Activated CD4-positive, alpha-beta T cell treated with anti-CD3 and anti-CD28 coated beads for 36 hours (primary cell): ENCODE measurements at regions of chr11 and their contacts with region 1.

Region 1: DNA sequence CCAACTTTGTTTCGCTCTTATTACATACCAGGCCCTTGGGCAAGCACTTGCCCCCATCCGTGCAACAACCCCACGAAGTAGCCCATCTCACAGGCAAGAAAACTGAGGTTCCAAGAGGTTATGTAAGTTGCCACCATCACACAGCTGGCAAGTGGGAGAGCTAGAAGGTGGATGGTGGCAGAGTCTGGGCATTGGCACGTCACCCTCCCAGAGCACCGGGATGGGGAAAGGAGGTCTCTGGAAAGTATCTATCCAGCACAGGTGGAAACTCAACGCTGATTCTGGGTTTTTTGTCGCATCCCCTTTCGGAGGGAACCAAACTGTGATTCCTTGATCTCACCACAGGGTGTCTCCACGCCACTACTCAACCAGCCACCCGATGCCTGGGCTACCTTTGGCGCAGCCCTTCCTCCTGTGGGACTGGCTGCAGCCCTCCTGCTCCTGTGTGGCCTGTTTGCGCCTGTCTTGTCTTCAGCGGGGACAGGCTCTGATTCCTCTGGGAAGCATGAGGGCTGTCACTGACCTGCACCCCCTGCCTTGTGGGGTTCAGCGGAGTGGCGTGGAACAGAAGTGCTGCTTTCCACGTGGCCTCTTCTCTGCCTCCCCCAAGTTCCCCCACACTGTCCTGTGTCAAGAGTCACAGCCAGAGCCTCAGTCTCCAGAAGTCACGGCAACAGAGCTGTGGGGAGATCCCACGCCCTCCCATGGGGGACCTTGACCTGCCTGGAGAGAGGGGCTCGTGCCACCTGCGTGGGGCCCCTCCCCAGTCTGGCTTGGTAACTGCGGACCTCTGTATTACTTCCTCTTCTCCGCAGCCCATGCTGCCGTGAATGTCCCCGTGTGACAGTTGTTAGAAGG is 34.4 kb upstream of the TRIM29 start:
- DNase-seq: peak; percentile 76
- ATAC-seq: peak; percentile 60
- H3K4me3 Mint-ChIP-seq: no peak overlapping the region
- H3K27ac Mint-ChIP-seq: no peak overlapping the region
- H3K4me1 Mint-ChIP-seq: peaks cover 4% of the 10 kb centered on the region
- H3K27me3 Mint-ChIP-seq: peaks cover 61% of the 10 kb centered on the region

Region 2: DNA sequence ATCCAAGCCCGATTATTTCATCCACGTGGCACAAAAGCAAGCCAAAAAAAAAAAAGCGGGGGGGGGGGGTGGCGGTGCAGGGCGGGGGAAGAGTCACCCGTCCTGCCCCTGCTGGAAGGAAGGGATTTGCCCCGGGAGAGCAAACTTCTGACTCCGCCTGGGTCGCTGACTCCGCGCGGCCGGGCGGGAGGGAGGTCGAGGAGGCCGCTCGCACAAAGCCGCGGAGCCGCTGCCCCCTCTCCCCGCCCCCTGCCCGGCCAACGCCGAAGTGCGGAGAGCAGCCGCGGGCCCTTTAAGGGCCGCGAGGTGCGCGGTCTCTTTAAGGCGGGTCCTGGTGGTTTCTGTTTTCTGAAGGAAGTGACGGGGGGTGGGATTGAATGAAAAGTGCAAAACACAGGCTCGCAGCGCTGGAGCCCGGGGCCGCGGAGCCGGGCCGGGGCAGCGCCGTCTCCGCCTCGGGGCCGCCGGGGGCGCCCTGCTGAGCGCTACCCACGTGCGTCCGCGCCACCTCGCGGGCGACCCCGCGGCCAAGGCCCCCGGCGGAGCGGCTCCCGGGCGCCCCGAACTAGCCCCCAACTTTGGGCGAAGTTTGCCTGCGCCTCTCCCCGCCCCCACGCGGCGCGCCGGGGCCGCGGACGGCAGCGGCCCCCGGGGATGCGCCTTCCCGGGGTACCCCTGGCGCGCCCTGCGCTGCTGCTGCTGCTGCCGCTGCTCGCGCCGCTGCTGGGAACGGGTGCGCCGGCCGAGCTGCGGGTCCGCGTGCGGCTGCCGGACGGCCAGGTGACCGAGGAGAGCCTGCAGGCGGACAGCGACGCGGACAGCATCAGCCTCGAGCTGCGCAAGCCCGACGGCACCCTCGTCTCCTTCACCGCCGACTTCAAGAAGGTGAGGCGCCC is 38.6 kb after region 1 on chr11 and contains the start of gene OAF:
- CTCF ChIA-PET with region 1: interaction called, 5 read pairs
- POLR2A ChIA-PET with region 1: no interaction called
- intact Hi-C with region 1: loop called in 1 of 2 experiments (anchors 1 kb)
- DNase-seq: peak; percentile 70
- ATAC-seq: peak; percentile 93
- H3K4me3 Mint-ChIP-seq: peak within 1 kb of the TSS; percentile 74
- H3K27ac Mint-ChIP-seq: peak within 1 kb of the TSS; percentile 34
- H3K4me1 Mint-ChIP-seq: peaks cover 11% of the 10 kb centered on the region
- H3K27me3 Mint-ChIP-seq: peaks cover 25% of the 10 kb centered on the region
- total RNA-seq, gene OAF: 1.4 to 1.6 TPM

Region 3: DNA sequence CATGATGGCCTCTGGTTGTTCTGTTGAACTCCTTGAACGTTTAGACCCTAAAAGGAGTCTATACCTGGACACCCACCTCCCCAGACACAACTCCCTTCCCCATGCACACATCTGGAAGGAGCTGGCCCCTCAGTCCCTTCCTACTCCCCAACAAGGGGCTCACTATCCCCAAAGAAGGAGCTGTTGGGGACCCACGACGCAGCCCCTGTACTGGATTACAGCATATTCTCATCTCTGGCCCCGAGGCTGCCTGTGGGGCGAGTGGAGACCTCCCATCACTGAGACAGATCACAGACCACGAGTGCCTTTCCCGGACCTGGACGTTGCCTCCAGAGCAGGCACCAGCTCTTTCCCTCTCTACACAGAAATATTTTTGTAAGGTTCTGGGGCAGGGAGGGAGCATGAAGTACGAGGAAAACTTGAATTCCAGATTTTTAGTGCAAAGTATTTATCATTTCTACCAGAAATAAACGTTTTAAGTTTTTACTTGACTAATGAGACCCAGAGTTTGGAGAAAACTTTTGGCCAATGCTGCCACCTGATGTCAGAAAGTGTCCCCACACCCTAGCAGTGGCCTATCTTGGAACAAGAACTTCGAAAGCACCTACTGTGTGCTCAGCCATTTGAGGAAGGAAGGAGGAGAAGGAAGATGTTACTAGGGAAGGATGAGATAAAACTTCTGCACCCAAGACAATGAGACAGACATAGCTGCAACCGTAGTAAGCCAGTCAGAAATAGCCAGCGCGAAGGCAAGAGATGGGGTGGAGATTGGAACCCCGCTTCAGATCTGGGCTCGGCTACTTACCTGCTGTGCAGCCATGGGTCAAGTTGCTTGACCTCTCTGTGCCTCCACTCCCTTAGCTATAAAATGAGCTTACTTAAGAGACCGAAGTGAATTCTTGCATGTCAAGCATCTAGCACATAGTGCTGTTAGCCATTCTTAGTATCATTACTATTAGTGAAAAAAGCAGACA is 57.5 kb after region 1 on chr11:
- CTCF ChIA-PET with region 1: interaction called, 18 read pairs
- POLR2A ChIA-PET with region 1: no interaction called
- intact Hi-C with region 1: loop called (anchors 1 kb)
- DNase-seq: peak; percentile 41
- ATAC-seq: no peak
- H3K4me3 Mint-ChIP-seq: no peak overlapping the region
- H3K27ac Mint-ChIP-seq: no peak overlapping the region
- H3K4me1 Mint-ChIP-seq: peaks cover 3% of the 10 kb centered on the region
- H3K27me3 Mint-ChIP-seq: peaks cover 9% of the 10 kb centered on the region

Region 4: GRCh38 chr11:120289426-120289825 is 117.1 kb after region 1 on chr11:
- CTCF ChIA-PET with region 1: interaction called, 3 read pairs
- POLR2A ChIA-PET with region 1: interaction called, 11 read pairs
- intact Hi-C with region 1: no loop called
- DNase-seq: no peak
- ATAC-seq: no peak
- H3K4me3 Mint-ChIP-seq: no peak overlapping the region
- H3K27ac Mint-ChIP-seq: no peak overlapping the region
- H3K4me1 Mint-ChIP-seq: no peaks in the 10 kb centered on the region
- H3K27me3 Mint-ChIP-seq: peaks cover 25% of the 10 kb centered on the region